GM10248 (cell line): ENCODE measurements at regions of chr18 and their contacts with region 1.

Region 1: DNA sequence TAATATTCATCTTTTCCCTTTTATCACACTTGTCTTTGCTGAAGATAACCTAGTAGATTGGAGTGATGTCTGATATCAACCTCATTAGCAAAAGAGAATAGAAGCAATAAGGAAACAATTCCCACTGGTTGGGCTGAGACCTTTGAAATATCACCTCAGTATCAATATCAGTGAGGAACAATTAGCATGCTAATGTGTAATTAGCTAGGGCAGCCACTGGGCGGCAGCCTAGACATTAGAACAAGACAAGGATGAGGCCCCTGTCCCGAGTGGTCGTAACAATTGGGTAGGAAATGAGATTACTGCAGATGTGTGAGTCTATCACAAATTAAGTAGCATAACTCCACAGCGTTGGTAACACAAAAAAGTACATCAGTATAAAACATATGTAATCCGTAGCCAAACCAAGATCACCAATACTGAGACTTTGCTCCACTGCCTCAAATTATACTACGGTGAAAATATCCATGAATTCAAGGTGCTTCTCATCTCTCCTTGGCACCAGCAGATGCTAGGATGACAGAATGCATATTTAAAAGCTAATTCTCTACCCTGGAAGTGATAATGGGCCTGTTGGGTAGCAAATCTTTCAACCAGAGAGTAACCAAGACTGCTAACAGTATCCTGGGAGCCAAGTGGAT is 99.1 kb downstream of the ALPK2 start:
- DNase-seq: peak; percentile 63
- CTCF ChIP-seq: peak; percentile 89

Region 2: GRCh38 chr18:58392324-58393000 is 137.4 kb before region 1 on chr18:
- CTCF ChIA-PET with region 1: no interaction called
- POLR2A ChIA-PET with region 1: no interaction called
- DNase-seq: no peak
- CTCF ChIP-seq: no peak

Region 3: DNA sequence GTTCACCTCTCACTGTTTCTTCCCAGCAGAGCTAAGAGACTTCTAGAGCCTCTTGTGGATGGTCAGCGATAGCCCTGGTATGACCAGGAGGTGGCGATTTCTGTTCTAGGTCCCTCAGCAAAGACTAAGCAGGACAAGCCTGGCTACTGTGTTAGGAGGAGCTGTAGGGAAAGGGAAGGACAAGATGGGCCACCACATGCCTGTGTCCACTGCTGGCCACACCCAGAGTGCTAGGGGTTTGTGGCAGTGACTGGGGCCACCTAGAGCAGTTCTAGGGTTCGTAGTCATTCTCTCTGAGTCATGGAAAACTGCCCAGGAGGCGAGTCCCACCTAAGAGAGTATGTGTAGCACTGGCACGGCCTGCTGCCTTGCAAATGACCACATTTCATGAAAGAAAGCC is 80.4 kb before region 1 on chr18:
- CTCF ChIA-PET with region 1: no interaction called
- POLR2A ChIA-PET with region 1: no interaction called
- DNase-seq: no peak
- CTCF ChIP-seq: no peak

Region 4: DNA sequence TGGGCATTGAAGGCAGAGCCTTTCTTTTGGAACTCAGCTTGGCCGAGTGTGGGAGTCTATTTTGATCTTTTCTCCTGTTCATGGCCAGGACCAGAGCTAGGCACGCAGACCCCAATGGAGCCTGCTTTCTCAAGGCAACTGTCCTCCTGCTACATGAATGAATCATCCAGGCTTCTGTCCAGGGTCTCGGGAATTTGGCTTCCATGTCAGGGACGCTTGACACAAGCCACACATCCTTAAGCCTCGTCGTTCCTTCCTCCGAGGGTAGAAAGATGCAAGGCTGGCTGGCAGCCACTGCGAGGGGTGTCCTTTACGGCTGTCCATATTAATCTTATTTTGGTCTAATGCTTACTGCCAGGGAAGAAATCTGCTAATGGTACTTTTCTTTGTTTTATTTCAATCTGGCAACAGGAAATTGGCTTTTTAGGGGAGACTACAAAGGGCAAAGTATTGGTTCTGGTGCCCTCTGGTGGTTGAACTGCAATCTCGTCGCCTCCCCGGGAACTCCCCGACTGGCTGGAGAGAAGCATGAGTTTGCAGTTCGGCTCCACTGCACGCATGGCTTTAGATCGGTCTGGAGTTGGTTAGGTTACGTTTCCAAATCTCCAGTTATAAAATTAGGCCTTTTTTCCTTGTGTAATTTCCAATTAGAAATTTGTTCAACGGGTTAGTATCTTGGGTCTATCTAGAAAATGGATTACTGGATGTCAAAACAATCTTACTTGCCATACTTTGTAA is 36.1 kb before region 1 on chr18:
- CTCF ChIA-PET with region 1: interaction called, 12 read pairs
- POLR2A ChIA-PET with region 1: no interaction called
- DNase-seq: peak; percentile 85
- CTCF ChIP-seq: peak; percentile 82

Region 5: GRCh38 chr18:58541789-58542425 is 12.1 kb after region 1 on chr18:
- CTCF ChIA-PET with region 1: interaction called, 35 read pairs
- POLR2A ChIA-PET with region 1: interaction called, 3 read pairs
- DNase-seq: peak; percentile 54
- CTCF ChIP-seq: no peak

Region 6: GRCh38 chr18:58565021-58565420 is 35.2 kb after region 1 on chr18:
- CTCF ChIA-PET with region 1: interaction called, 15 read pairs
- POLR2A ChIA-PET with region 1: interaction called, 3 read pairs
- DNase-seq: peak; percentile 61
- CTCF ChIP-seq: no peak

Region 7: DNA sequence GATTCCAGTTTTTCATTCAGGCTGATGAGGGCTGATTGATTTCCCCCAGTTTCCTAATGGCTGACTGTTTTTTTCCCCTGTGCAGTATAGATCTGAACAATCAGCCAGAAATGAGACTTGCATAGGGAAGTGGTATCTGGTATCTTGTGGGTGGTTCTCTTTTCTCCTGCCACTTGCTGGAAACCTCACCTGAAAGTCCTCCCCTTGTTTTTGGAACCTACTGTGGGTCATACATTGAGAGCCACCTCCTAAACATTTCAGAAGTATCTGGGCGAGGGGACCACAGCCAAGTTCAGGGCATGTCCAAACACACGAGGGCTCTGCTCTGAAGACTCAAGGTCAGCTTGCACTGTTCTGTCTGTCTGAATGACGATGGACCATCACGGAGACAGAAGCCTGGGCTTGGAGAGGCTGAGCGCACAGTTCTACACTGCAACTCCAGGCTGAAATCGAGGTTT is 79.7 kb after region 1 on chr18:
- CTCF ChIA-PET with region 1: no interaction called
- POLR2A ChIA-PET with region 1: no interaction called
- DNase-seq: peak; percentile 48
- CTCF ChIP-seq: no peak

Region 8: DNA sequence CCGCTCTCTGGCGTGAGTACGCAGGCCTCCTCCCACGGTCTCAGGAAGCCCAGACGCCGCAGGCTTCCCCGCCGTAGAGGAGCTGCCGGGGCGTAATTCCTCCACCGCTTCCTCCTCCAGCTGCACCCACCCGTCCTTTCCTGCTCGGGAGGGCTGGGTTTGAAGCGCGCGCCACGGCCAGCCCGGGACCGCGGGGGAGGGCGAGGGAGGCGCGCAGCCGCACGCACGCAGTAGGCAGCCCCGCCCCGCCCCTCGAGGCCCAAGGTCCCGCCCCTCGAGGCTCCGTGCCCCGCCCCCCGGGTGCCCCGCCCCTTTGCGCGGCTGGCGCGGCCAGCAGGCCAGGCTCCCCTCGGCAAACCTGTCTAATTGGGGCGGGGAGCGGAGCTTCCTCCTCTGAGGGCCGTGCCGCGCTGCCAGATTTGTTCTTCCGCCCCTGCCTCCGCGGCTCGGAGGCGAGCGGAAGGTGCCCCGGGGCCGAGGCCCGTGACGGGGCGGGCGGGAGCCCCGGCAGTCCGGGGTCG is 141.3 kb after region 1 on chr18 and contains the start of gene MALT1:
- CTCF ChIA-PET with region 1: interaction called, 36 read pairs
- POLR2A ChIA-PET with region 1: interaction called, 4 read pairs
- DNase-seq: peak; percentile 95
- CTCF ChIP-seq: no peak

Region 9: GRCh38 chr18:58712930-58713329 is 183.1 kb after region 1 on chr18:
- CTCF ChIA-PET with region 1: interaction called, 12 read pairs
- POLR2A ChIA-PET with region 1: no interaction called
- DNase-seq: no peak
- CTCF ChIP-seq: no peak

Region 10: GRCh38 chr18:58754544-58755068 is 224.8 kb after region 1 on chr18:
- CTCF ChIA-PET with region 1: interaction called, 366 read pairs
- POLR2A ChIA-PET with region 1: no interaction called
- DNase-seq: no peak
- CTCF ChIP-seq: no peak

Region 11: GRCh38 chr18:59196161-59196725 is 666.4 kb after region 1 on chr18:
- CTCF ChIA-PET with region 1: no interaction called
- POLR2A ChIA-PET with region 1: no interaction called
- DNase-seq: no peak
- CTCF ChIP-seq: no peak